IMR-90 (cell line): ENCODE measurements at regions of chr1 and their contacts with region 1.

Region 1: DNA sequence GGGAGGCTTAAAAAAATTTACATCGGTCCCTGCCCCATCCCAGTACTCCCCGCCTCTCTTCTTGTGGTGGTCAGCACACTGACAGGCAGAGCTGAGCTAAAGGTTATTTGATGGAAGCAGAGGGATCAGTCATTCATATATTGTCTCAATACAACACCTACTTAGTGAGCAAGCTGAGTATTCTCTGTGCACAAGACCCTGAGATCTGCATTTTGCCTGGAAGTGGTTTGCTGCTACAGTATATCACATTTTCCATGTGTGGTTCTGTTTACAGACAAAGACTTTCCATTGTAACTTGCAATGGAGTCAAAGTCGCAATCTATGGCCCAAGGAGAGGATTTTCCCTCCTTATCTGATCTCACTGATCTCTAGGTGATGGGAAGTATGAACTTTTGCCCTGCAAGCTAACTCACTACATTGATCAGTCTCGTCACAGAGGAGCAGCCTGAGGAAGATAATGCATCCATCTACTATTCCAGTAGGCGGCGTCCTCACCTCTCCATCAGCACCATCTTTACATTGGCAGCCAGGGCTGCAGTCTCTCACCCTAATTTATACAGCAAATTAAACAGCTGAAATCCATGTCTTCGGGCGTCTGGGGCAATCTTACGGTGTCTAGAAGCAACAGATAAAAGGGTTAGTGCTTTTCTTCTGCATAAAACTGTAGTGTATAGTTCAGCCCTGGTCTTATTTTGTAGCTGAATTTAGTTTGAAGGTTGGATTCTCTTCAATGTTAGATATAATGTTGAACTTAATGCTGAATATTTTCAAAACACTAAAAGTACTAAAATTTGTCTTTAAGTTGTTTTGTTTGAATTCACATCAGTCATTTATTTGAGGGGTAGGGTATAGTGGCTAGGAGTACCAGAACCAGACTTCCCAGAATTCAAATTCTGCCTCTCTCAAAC is 3.2 kb upstream of the TRAF5 start:
- DNase-seq: peak; percentile 65
- ATAC-seq: peak; percentile 59
- H3K4me3 ChIP-seq: no peak overlapping the region
- H3K27ac ChIP-seq: no peak overlapping the region
- H3K4me1 ChIP-seq: peaks cover 5% of the 10 kb centered on the region
- H3K27me3 ChIP-seq: no peaks in the 10 kb centered on the region
- CTCF ChIP-seq: peak; percentile 86
- POLR2A ChIP-seq: no peak
- RAD21 ChIP-seq: peak; percentile 88

Region 2: GRCh38 chr1:210448297-210448892 is 875.0 kb before region 1 on chr1:
- CTCF ChIA-PET with region 1: no interaction called
- POLR2A ChIA-PET with region 1: no interaction called
- dilution Hi-C with region 1: no loop called
- in situ Hi-C with region 1: no loop called
- intact Hi-C with region 1: loop called (anchors 1 kb)
- DNase-seq: peak; percentile 69
- ATAC-seq: peak; percentile 93
- H3K4me3 ChIP-seq: no peak overlapping the region
- H3K27ac ChIP-seq: no peak overlapping the region
- H3K4me1 ChIP-seq: no peaks in the 10 kb centered on the region
- H3K27me3 ChIP-seq: no peaks in the 10 kb centered on the region
- CTCF ChIP-seq: peak; percentile 85
- POLR2A ChIP-seq: no peak
- RAD21 ChIP-seq: peak; percentile 87

Region 3: GRCh38 chr1:210814382-210815123 is 508.9 kb before region 1 on chr1:
- CTCF ChIA-PET with region 1: no interaction called
- POLR2A ChIA-PET with region 1: no interaction called
- dilution Hi-C with region 1: no loop called
- in situ Hi-C with region 1: no loop called
- intact Hi-C with region 1: no loop called
- DNase-seq: no peak
- ATAC-seq: no peak
- H3K4me3 ChIP-seq: no peak overlapping the region
- H3K27ac ChIP-seq: no peak overlapping the region
- H3K4me1 ChIP-seq: no peaks in the 10 kb centered on the region
- H3K27me3 ChIP-seq: no peaks in the 10 kb centered on the region
- CTCF ChIP-seq: no peak
- POLR2A ChIP-seq: no peak
- RAD21 ChIP-seq: no peak

Region 4: DNA sequence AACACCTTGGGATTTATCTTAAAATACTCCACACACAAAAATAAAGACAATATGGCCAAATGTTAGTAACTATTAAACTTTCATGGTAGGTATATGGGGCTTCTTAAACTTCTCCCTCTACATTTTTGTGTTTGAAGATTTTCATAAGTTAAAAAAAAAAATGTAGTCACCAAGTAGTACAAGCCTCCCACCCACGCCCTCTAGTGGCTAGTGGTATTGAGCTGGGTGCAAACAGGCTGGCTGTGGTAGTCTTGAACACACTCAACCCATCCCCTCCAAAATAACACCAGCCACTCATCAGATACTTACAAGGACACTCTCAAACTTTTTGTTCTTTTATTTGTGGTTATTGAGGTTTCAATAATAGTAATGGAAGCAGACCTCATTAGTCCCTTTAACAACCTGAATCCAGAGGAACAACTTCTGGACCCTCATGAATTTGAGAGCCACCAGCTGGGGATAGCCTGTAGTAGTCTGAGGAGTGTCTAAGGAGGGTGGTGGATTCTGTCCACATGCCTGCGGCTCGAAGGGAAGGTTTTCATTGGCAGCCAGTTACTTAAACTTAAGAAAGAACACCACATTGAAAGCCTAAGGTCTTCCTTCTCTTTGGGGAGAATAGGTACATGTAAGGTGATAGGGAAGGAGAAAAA is 152.9 kb after region 1 on chr1:
- CTCF ChIA-PET with region 1: interaction called, 6 read pairs
- POLR2A ChIA-PET with region 1: no interaction called
- dilution Hi-C with region 1: no loop called
- in situ Hi-C with region 1: loop called (anchors 10 kb)
- intact Hi-C with region 1: loop called (anchors 1 kb)
- DNase-seq: peak; percentile 63
- ATAC-seq: peak; percentile 93
- H3K4me3 ChIP-seq: no peak overlapping the region
- H3K27ac ChIP-seq: no peak overlapping the region
- H3K4me1 ChIP-seq: no peaks in the 10 kb centered on the region
- H3K27me3 ChIP-seq: peaks cover 36% of the 10 kb centered on the region
- CTCF ChIP-seq: peak; percentile 80
- POLR2A ChIP-seq: no peak
- RAD21 ChIP-seq: peak; percentile 60

Region 5: DNA sequence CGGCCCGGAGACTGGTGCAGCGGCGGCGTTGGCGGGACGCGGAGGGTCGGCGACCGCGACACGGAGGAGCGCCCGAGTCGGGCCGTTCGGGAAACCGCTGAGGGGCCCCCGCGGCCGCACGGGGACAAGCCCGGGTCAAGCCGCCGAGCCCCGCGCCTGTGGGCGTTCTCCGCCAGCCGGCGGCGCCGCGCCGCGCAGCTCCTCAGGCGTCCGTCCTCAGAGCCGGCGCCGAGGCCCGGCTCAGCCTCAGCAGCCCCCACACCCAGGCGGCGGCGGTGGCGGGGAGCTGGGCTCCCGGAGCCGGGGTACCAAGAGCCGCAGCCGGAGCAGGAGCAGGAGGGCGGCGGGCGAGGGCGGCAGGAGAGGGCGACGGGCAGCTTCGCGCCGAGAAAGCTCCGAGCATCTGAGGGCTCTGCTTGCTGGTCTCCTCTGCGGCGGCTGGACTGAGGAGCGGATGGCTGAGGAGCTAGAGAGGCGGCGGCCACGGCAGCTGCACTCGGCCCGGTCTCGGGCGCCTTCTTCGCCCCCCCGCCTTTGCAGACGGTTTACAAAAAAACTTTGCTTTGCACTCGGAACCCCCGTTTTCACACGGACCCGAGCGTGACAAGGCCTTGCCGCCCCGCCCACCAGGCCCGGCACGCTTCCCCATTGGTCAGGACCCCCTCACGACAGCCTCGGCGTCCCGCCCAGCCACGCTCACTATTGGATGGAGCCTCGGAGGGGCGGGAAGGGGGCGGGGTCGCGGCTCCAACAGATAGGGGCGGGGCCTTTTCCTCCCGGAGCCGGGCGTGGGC is 255.4 kb after region 1 on chr1 and contains the start of gene SLC30A1:
- CTCF ChIA-PET with region 1: no interaction called
- POLR2A ChIA-PET with region 1: no interaction called
- dilution Hi-C with region 1: no loop called
- in situ Hi-C with region 1: no loop called
- intact Hi-C with region 1: loop called (anchors 5 kb)
- DNase-seq: peak; percentile 97
- ATAC-seq: peak; percentile 93
- H3K4me3 ChIP-seq: peak within 1 kb of the TSS; percentile 96
- H3K27ac ChIP-seq: peak within 1 kb of the TSS; percentile 91
- H3K4me1 ChIP-seq: peaks cover 13% of the 10 kb centered on the region
- H3K27me3 ChIP-seq: no peaks in the 10 kb centered on the region
- CTCF ChIP-seq: 0 out of 2 replicates have a peak, but pooled peaks have one; percentile 13
- POLR2A ChIP-seq: peak; percentile 74
- RAD21 ChIP-seq: no peak
- total RNA-seq, gene SLC30A1: 8.4 and 17.8 TPM in 2 replicates

Region 6: DNA sequence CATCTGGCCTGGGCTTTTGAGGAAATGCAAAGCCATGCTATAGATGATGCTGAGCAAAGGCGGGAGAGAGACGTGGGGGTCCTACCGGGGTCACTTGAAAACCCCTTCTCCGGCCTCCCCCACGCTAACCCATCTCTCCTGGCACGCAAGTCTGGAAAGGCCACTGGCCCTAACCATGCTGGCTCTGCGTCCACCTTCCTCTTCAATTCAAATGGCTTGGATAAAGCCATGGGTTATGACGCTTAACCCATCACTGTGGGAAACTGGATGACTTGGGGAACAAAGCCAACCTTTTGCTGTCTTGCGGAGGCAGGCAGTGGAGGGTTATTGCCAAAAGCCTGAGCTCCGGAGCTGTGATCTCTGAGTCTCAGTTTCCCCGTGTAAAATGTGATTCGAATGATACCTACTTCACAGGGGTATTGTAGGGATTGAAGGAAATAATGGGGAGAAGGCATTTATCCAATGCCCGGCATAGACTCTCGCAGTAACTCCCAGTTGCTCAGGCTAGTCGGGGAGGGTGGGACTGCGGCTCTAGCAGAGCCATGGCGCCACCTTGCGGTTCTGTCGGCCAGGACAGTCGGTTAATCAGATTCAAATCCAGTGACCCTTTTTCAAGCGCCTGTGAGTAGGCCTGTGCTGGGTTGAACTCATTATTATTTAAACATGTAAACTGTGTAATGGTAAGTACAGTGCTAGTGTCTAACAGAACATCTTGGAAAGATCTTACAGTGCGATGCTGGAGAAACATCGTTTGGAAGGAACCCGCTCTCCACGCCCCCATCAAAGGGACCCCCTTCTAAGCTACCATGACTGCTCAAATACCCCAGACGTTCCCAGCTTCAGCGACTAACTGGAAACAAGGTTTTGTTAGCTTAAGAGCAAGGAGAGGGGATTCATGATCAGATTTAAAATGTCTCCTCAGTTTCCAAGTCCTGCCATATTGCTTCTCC is 331.7 kb after region 1 on chr1:
- CTCF ChIA-PET with region 1: interaction called, 6 read pairs
- POLR2A ChIA-PET with region 1: no interaction called
- dilution Hi-C with region 1: no loop called
- in situ Hi-C with region 1: no loop called
- intact Hi-C with region 1: loop called (anchors 1 kb)
- DNase-seq: peak; percentile 84
- ATAC-seq: peak; percentile 98
- H3K4me3 ChIP-seq: no peak overlapping the region
- H3K27ac ChIP-seq: no peak overlapping the region
- H3K4me1 ChIP-seq: peaks cover 8% of the 10 kb centered on the region
- H3K27me3 ChIP-seq: no peaks in the 10 kb centered on the region
- CTCF ChIP-seq: peak; percentile 99
- POLR2A ChIP-seq: peak; percentile 61; the same call in 1 of the 2 replicates
- RAD21 ChIP-seq: peak; percentile 100